H1 (cell line): ENCODE measurements at regions of chr15 and their contacts with region 1.

Region 1: GRCh38 chr15:81809543-81809942 is 236.3 kb downstream of the MEX3B start:
- DNase-seq: no peak
- H3K4me3 ChIP-seq: no peak overlapping the region
- H3K27ac ChIP-seq: no peak overlapping the region
- H3K4me1 ChIP-seq: no peaks in the 10 kb centered on the region
- H3K27me3 ChIP-seq: no peaks in the 10 kb centered on the region
- CTCF ChIP-seq: peak; percentile 44 to 65 (median 50); a peak in 3 of 4 replicates
- EP300 ChIP-seq: no peak
- POLR2A ChIP-seq: no peak
- RAD21 ChIP-seq: peak; percentile 47 to 64

Region 2: GRCh38 chr15:81480645-81481053 is 328.9 kb before region 1 on chr15:
- CTCF ChIA-PET with region 1: interaction called, 18 read pairs
- POLR2A ChIA-PET with region 1: no interaction called
- DNase-seq: peak in 1 of 2 experiments; percentile 54
- H3K4me3 ChIP-seq: no peak overlapping the region
- H3K27ac ChIP-seq: no peak overlapping the region
- H3K4me1 ChIP-seq: peaks cover 0 to 3% (median 0%) of the 10 kb centered on the region in 4 experiments; a peak in 2 of 7 replicates
- H3K27me3 ChIP-seq: no peaks in the 10 kb centered on the region
- CTCF ChIP-seq: peak in 2 of 3 experiments; percentile 55 to 65; a peak in 2 of 4 replicates
- EP300 ChIP-seq: no peak
- POLR2A ChIP-seq: no peak
- RAD21 ChIP-seq: peak; percentile 85 to 89

Region 3: DNA sequence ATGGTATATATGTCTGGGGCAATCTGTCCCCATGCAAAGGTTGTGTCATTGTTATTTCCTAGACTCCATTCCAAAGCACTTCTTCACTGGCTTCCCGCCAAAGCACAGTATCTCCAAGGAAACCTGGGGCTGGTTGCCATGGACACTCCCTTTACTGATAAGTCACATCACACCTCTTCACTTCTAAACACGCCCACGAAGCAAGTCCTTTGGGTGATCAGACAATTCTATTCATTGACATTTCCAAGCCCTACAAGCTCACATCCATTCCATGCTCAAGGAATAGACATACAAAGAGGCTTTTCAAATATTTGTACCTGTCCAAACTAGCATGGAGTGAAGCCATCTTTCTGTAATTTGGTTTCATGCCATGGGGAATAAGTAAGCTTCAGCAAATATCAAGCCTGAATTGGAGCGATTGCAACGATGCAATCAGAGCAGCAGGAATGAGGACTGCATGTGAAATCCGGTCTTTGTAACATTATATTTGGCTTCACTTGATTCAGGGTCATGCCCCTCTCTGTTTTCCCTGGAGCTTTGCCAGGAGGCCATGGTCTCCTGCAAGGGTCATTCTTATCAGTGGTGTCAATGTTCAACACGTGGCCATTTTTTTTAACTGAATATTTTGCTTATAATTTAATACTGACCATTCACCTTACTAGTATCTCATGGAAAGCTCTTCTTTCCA is 234.0 kb before region 1 on chr15:
- CTCF ChIA-PET with region 1: no interaction called
- POLR2A ChIA-PET with region 1: no interaction called
- DNase-seq: no peak
- H3K4me3 ChIP-seq: no peak overlapping the region
- H3K27ac ChIP-seq: no peak overlapping the region
- H3K4me1 ChIP-seq: peaks cover 0 to 4% (median 0%) of the 10 kb centered on the region in 4 experiments; a peak in 1 of 7 replicates
- H3K27me3 ChIP-seq: no peaks in the 10 kb centered on the region
- CTCF ChIP-seq: no peak
- EP300 ChIP-seq: no peak
- POLR2A ChIP-seq: no peak
- RAD21 ChIP-seq: no peak

Region 4: DNA sequence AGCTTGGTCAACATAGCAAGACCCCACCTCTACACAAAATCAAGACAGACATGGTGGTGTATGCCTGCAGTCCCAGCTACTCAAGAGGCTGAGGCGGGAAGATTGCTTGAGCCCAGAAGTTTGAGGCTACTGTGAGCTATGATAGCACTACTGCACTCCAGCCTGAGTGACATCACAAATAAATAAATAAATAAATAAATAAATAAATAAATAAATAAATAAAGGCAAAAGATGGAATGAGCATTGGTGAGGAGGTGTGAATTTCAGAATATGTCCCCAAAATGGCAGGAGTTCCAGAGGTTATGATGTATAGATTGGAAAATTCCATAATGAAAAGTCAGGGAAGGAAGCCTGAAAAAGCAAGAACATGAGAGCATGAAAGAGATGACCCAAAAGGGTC is 13.6 kb before region 1 on chr15:
- CTCF ChIA-PET with region 1: interaction called, 22 read pairs
- POLR2A ChIA-PET with region 1: interaction called, 3 read pairs
- DNase-seq: no peak
- H3K4me3 ChIP-seq: no peak overlapping the region
- H3K27ac ChIP-seq: no peak overlapping the region
- H3K4me1 ChIP-seq: peaks cover 0 to 22% (median 11%) of the 10 kb centered on the region in 4 experiments; a peak in 4 of 7 replicates
- H3K27me3 ChIP-seq: no peaks in the 10 kb centered on the region
- CTCF ChIP-seq: no peak
- EP300 ChIP-seq: no peak
- POLR2A ChIP-seq: no peak
- RAD21 ChIP-seq: no peak

Region 5: DNA sequence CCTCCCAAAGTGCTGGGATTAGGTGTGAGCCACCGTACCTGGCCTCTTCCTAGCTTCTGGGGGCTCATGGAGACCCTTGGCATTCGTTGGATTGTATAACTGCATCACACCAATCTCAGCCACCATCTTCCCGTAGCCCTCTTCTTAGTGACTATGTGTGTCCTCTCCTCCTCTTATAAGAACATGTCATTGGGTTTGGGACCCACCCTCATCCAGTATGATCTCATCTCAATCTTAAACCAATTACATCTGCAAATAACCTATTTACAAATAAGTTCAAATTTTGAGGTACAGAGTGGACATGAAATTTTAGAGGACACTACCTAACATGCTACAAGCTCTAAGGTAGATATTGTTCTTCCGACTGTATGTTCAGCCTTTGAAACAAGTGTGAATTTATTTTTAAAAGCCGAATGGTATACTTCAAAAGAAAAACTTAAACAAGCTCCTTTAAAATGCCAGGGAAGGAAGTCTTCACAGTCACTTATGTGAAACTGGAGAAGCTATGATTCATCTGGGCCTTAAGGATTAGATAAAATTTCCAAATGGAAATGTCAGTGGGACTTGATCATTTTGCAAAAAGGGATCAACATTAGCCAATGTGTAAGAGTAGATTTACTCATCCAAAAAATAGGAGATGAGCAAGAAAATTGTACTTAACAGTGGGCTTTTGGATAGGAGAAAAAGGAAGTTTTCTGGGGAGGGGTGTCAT is 10.5 kb after region 1 on chr15:
- CTCF ChIA-PET with region 1: interaction called, 19 read pairs
- POLR2A ChIA-PET with region 1: interaction called, 3 read pairs
- DNase-seq: no peak
- H3K4me3 ChIP-seq: no peak overlapping the region
- H3K27ac ChIP-seq: no peak overlapping the region
- H3K4me1 ChIP-seq: no peaks in the 10 kb centered on the region
- H3K27me3 ChIP-seq: no peaks in the 10 kb centered on the region
- CTCF ChIP-seq: no peak
- EP300 ChIP-seq: no peak
- POLR2A ChIP-seq: no peak
- RAD21 ChIP-seq: no peak

Region 6: DNA sequence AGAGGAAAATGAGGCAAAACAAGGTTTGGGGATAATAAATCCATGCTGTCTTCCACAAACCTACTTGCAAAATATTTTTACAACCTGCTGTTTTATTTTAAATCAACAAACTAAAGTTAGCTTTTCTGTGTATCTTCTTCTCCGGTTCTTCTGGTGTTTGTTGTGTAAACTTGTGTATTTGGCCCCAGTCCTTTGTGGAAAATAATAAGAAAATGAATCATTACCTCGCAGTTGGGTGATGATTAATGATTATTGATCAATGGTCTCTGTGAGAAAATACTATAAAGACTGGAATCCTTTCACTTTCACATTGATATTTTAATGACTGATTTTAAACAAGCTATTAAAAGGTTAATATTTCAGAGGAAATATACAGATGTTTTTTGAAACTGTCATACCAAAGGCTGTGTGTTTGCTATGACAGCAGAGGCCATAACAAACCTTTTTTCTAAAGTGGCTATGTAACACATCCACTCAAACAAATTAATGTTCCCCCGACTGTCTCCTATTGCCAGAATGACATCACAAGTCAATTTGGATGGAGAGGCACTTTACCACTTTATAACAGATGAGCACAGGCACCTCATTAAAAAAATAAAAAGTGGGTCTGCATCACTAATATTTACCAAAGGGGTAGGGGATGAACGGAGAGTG is 83.8 kb after region 1 on chr15:
- CTCF ChIA-PET with region 1: interaction called, 12 read pairs
- POLR2A ChIA-PET with region 1: no interaction called
- DNase-seq: no peak
- H3K4me3 ChIP-seq: no peak overlapping the region
- H3K27ac ChIP-seq: no peak overlapping the region
- H3K4me1 ChIP-seq: no peaks in the 10 kb centered on the region
- H3K27me3 ChIP-seq: no peaks in the 10 kb centered on the region
- CTCF ChIP-seq: no peak
- EP300 ChIP-seq: no peak
- POLR2A ChIP-seq: no peak
- RAD21 ChIP-seq: no peak

Region 7: GRCh38 chr15:81939604-81940440 is 130.3 kb after region 1 on chr15:
- CTCF ChIA-PET with region 1: interaction called, 20 read pairs
- POLR2A ChIA-PET with region 1: no interaction called
- DNase-seq: peak; percentile 15 to 53
- H3K4me3 ChIP-seq: no peak overlapping the region
- H3K27ac ChIP-seq: no peak overlapping the region
- H3K4me1 ChIP-seq: peaks cover 0 to 5% (median 1%) of the 10 kb centered on the region in 4 experiments; a peak in 2 of 7 replicates
- H3K27me3 ChIP-seq: no peaks in the 10 kb centered on the region
- CTCF ChIP-seq: peak in 2 of 3 experiments; percentile 57 to 72; a peak in 3 of 4 replicates
- EP300 ChIP-seq: no peak
- POLR2A ChIP-seq: no peak
- RAD21 ChIP-seq: peak; percentile 86 to 88

Region 8: GRCh38 chr15:81955382-81956062 is 146.0 kb after region 1 on chr15:
- CTCF ChIA-PET with region 1: no interaction called
- POLR2A ChIA-PET with region 1: no interaction called
- DNase-seq: no peak
- H3K4me3 ChIP-seq: no peak overlapping the region
- H3K27ac ChIP-seq: no peak overlapping the region
- H3K4me1 ChIP-seq: no peaks in the 10 kb centered on the region
- H3K27me3 ChIP-seq: no peaks in the 10 kb centered on the region; a peak in 1 of 7 replicates
- CTCF ChIP-seq: no peak
- EP300 ChIP-seq: no peak
- POLR2A ChIP-seq: no peak
- RAD21 ChIP-seq: no peak